ENCODE measurements at regions of chr21 and their contacts with region 1.

Region 1: DNA sequence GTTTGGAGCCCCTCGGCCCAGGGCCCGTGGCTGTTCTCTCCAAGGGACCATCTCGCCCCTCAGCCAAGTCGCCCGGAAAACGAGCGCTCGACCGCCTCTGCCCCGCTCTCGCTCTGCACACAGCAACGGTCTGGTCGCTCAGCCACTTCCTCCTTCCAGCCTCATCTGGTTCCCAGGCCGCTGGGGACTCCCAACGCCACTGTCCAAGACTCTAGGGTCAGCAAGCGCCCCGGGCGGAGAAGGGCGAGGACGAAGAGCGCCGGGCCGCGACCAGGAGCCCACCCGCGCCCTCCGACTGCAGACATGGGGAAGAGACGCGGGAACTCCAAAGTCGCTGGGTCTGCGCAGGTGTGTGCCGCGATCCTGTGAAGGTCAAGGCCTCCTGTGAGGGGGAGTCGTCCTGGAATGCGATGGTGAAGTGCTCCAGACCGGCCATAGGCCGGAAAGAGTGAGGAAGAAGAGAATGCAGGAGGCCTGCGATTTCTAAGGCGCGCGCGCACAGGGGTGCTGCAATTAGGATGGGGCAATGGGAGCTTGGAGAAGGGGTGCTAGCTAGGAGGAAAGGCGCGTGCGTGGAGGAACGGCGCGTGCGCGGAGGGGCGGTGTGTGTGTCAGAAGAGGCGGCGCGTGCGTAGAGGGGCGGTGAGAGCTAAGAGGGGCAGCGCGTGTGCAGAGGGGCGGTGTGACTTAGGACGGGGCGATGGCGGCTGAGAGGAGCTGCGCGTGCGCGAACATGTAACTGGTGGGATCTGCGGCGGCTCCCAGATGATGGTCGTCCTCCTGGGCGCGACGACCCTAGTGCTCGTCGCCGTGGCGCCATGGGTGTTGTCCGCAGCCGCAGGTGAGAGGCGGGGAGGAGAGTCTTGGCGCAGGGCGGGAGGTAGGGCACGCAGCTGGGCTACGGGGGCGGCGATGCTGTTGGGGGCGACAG is at the start of gene IFNAR1:
- DNase-seq: peak; percentile 92 to 100 (median 98)
- ATAC-seq: peak; percentile 83 to 84
- H3K4me3 Mint-ChIP-seq: no peak within 1 kb of the TSS
- H3K27ac Mint-ChIP-seq: no peak within 1 kb of the TSS
- H3K4me1 Mint-ChIP-seq: peaks cover 9 to 32% (median 27%) of the 10 kb centered on the region in 4 donors
- H3K27me3 Mint-ChIP-seq: no peaks in the 10 kb centered on the region
- polyA plus RNA-seq, gene IFNAR1: 48.7 to 69.0 (median 51.8) TPM

Region 2: DNA sequence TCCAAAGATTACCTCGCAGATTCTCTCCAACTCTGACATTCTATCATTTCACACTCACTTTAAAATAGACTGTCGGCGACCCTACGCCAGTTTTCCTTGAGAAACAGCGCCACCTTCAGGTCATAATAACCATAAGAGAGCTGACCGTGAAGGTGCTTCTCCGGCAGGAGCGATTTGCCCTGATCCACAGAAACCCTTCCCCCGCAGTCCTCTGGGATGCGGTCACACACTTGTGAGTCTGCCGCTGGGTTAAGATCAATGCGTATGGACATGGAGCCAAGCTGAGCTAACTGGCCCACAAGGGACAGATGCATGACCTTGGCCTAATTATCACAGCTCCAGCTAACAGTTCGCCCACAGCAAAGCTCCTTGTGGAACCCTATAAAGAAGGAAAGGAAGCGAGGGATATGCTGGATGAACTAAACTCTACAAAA is 127.6 kb before region 1 on chr21:
- POLR2A ChIA-PET with region 1: no interaction called
- DNase-seq: peak; percentile 27 to 78 (median 56)
- ATAC-seq: peak; percentile 53 to 57
- H3K4me3 Mint-ChIP-seq: no peak overlapping the region
- H3K27ac Mint-ChIP-seq: peak overlapping the region in 1 of 10 donors; percentile 13
- H3K4me1 Mint-ChIP-seq: peaks cover 6 to 35% (median 24%) of the 10 kb centered on the region in 4 donors
- H3K27me3 Mint-ChIP-seq: peaks cover 0 to 3% (median 0%) of the 10 kb centered on the region in 5 donors

Region 3: GRCh38 chr21:33266050-33266788 is 58.3 kb before region 1 on chr21 and contains the start of gene IL10RB:
- POLR2A ChIA-PET with region 1: interaction called, 19 read pairs
- DNase-seq: peak; percentile 47 to 81 (median 70)
- ATAC-seq: peak; percentile 78 to 85
- H3K4me3 Mint-ChIP-seq: peak within 1 kb of the TSS; percentile 91 to 99 (median 96)
- H3K27ac Mint-ChIP-seq: peak within 1 kb of the TSS; percentile 90 to 98 (median 96)
- H3K4me1 Mint-ChIP-seq: peaks cover 38 to 80% (median 66%) of the 10 kb centered on the region in 4 donors
- H3K27me3 Mint-ChIP-seq: no peaks in the 10 kb centered on the region
- polyA plus RNA-seq, gene IL10RB: 44.6 to 50.6 (median 50.5) TPM

Region 4: DNA sequence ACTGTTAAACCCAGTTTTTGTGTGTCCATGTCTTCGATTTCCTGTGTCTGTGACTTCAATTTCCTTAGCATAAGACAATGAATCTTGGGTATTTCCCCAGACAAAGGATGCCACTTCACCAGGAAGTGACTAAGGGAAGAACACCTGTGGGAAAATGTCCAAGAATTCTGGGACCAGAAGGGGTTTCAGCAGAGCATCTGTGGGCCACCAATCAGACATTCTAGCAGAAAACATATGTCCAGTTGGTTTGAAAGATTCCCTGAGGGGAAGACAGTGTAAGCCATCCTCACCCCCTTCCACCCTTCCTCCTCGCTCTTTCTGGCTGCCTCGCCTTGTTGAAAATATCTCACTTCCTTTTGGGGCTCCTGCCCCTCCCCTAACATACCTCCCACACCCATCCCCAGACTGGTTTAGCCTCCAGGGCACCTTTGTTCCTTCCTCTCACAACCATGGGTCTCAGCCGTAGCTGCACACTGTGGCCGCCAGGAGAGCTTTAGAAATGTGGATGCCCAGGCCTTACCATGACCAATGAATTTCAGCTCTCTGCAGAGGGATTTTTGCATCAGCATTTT is 25.3 kb before region 1 on chr21:
- POLR2A ChIA-PET with region 1: interaction called, 29 read pairs
- DNase-seq: peak in 9 of 10 donors; percentile 17 to 72 (median 34)
- ATAC-seq: peak; percentile 91 to 94
- H3K4me3 Mint-ChIP-seq: peak overlapping the region; percentile 52 to 83 (median 72)
- H3K27ac Mint-ChIP-seq: peak overlapping the region; percentile 80 to 90 (median 86)
- H3K4me1 Mint-ChIP-seq: peaks cover 21 to 69% (median 49%) of the 10 kb centered on the region in 4 donors
- H3K27me3 Mint-ChIP-seq: no peaks in the 10 kb centered on the region

Region 5: DNA sequence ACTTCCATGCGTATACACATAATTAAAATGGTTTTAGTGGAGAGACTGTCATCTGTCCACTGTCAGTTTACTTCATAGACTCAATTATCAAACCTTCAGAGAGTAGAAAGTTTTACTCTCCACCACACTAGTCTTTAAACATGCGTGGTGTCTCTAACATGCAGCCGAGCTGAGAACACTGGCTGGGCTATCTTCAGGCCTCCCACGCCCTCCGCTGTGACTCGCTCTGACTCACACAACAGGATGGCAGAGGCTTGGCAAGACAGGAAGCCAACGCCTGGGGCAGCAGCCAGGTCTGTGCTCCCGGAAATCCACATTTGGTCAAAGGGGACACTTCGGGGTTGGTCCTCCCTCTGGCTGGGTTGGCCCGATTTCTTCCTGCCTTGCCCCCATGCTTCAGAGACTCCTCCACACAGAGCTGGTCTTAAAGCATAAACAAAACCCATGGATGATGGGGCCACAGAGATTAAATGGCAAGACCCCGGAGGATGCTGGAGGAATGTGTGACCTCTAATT is 56.0 kb after region 1 on chr21:
- POLR2A ChIA-PET with region 1: interaction called, 20 read pairs
- DNase-seq: peak; percentile 50 to 92 (median 74)
- ATAC-seq: peak; percentile 74 to 77
- H3K4me3 Mint-ChIP-seq: peak overlapping the region; percentile 19 to 80 (median 68)
- H3K27ac Mint-ChIP-seq: peak overlapping the region; percentile 86 to 95 (median 91)
- H3K4me1 Mint-ChIP-seq: peaks cover 27 to 82% (median 61%) of the 10 kb centered on the region in 4 donors
- H3K27me3 Mint-ChIP-seq: no peaks in the 10 kb centered on the region